Panc1 (cell line): ENCODE measurements at regions of chr11 and their contacts with region 1.

Region 1: GRCh38 chr11:83115551-83115950 is 41.4 kb upstream of the PCF11 start:
- DNase-seq: no peak
- ATAC-seq: peak; percentile 33
- H3K4me3 ChIP-seq: no peak overlapping the region
- H3K27ac ChIP-seq: no peak overlapping the region
- H3K4me1 ChIP-seq: no peaks in the 10 kb centered on the region
- H3K27me3 ChIP-seq: no peaks in the 10 kb centered on the region
- CTCF ChIP-seq: no peak

Region 2: GRCh38 chr11:82883853-82884252 is 231.7 kb before region 1 on chr11:
- CTCF ChIA-PET with region 1: no interaction called
- POLR2A ChIA-PET with region 1: no interaction called
- in situ Hi-C with region 1: no loop called
- intact Hi-C with region 1: no loop called
- DNase-seq: no peak
- ATAC-seq: no peak
- H3K4me3 ChIP-seq: no peak overlapping the region
- H3K27ac ChIP-seq: no peak overlapping the region
- H3K4me1 ChIP-seq: no peaks in the 10 kb centered on the region
- H3K27me3 ChIP-seq: no peaks in the 10 kb centered on the region
- CTCF ChIP-seq: no peak

Region 3: GRCh38 chr11:83187465-83187864 is 71.9 kb after region 1 on chr11:
- CTCF ChIA-PET with region 1: interaction called, 6 read pairs
- POLR2A ChIA-PET with region 1: interaction called, 19 read pairs
- in situ Hi-C with region 1: no loop called
- intact Hi-C with region 1: no loop called
- DNase-seq: no peak
- ATAC-seq: peak; percentile 60
- H3K4me3 ChIP-seq: no peak overlapping the region
- H3K27ac ChIP-seq: no peak overlapping the region
- H3K4me1 ChIP-seq: peaks cover 4% of the 10 kb centered on the region
- H3K27me3 ChIP-seq: no peaks in the 10 kb centered on the region
- CTCF ChIP-seq: no peak